ENCODE measurements at regions of chr17 and their contacts with region 1.

Region 1: DNA sequence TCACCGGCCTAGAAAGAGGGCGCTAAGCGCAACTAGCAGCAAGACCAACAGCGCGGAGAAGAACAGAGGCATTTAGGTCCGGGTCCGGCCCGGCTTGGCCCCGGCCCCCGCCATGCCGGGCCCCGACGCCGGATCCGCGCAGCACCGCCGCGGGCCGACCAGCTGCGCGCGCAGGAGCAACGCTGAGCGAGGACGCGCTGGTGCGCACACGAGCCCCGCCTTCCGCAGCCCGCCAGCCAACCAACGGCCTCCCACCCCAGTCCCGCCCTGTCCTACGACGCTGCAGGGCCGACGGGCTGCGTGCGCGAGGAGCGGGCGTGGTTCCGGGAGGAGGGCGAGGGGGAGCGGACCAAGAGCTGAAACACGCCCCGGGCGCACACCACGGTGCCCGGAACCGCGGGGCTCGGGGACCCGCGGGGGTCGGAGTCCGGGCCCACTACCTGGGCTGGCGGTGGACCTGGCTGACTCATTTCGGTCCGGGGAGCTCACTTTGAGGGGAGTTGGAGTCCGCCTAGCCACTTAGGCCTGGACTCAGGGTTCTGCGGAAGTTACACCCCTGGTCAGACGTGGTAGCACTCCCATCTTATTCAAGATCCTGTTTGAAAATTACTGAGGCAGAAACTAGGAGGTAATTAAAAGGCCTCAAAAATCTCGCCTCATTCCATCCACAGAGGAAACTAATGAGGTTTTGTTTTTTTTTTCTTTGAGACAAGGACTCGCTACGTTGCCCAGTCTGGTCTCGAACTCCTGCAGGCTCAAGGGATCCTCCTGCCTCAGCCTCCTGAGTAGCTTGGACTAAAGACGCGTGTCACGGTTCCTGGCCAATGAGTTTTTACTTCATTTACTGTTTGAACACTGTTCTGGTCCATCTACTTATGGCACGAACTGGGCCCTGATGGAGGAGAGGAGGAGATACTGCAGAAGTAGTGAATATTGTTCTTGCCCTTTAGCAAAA is at the start of gene BLTP2:
- DNase-seq: peak; percentile 97
- ATAC-seq: peak; percentile 97
- H3K4me3 ChIP-seq: peak within 1 kb of the TSS; percentile 79 to 93 (median 81)
- H3K4me3 Mint-ChIP-seq: peak within 1 kb of the TSS; percentile 97
- H3K27ac ChIP-seq: peak within 1 kb of the TSS; percentile 90 to 94
- H3K27ac Mint-ChIP-seq: peak within 1 kb of the TSS; percentile 89
- H3K4me1 ChIP-seq: peaks cover 32 to 37% of the 10 kb centered on the region in 2 donors
- H3K4me1 Mint-ChIP-seq: peaks cover 36% of the 10 kb centered on the region
- H3K27me3 ChIP-seq: no peaks in the 10 kb centered on the region
- H3K27me3 Mint-ChIP-seq: no peaks in the 10 kb centered on the region
- CTCF ChIP-seq: no peak
- total RNA-seq, gene BLTP2: 156 and 177 TPM in 2 replicates

Region 2: GRCh38 chr17:28598799-28599310 is 46.4 kb before region 1 on chr17 and contains the start of gene SPAG5:
- CTCF ChIA-PET with region 1: interaction called, 3 read pairs
- POLR2A ChIA-PET with region 1: interaction called, 5 read pairs
- intact Hi-C with region 1: loop called (anchors 1 kb)
- DNase-seq: peak; percentile 96
- ATAC-seq: peak; percentile 92
- H3K4me3 ChIP-seq: peak within 1 kb of the TSS; percentile 72 to 90 (median 79)
- H3K4me3 Mint-ChIP-seq: peak within 1 kb of the TSS; percentile 98
- H3K27ac ChIP-seq: peak within 1 kb of the TSS; percentile 95 to 98
- H3K27ac Mint-ChIP-seq: peak within 1 kb of the TSS; percentile 98
- H3K4me1 ChIP-seq: peaks cover 19% of the 10 kb centered on the region in 2 donors
- H3K4me1 Mint-ChIP-seq: peaks cover 24% of the 10 kb centered on the region
- H3K27me3 ChIP-seq: no peaks in the 10 kb centered on the region
- H3K27me3 Mint-ChIP-seq: no peaks in the 10 kb centered on the region
- CTCF ChIP-seq: no peak
- total RNA-seq, gene SPAG5: 8.0 and 10.1 TPM in 2 replicates

Region 3: GRCh38 chr17:28710861-28711722 is 65.8 kb after region 1 on chr17:
- CTCF ChIA-PET with region 1: interaction called, 7 read pairs
- POLR2A ChIA-PET with region 1: interaction called, 4 read pairs
- intact Hi-C with region 1: loop called (anchors 1 kb)
- DNase-seq: peak; percentile 88
- ATAC-seq: peak; percentile 90
- H3K4me3 ChIP-seq: peak overlapping the region; percentile 54 to 88 (median 73)
- H3K4me3 Mint-ChIP-seq: peak overlapping the region; percentile 96
- H3K27ac ChIP-seq: peak overlapping the region; percentile 69 to 79
- H3K27ac Mint-ChIP-seq: peak overlapping the region; percentile 93
- H3K4me1 ChIP-seq: peaks cover 9 to 18% of the 10 kb centered on the region in 2 donors
- H3K4me1 Mint-ChIP-seq: peaks cover 19% of the 10 kb centered on the region
- H3K27me3 ChIP-seq: no peaks in the 10 kb centered on the region
- H3K27me3 Mint-ChIP-seq: no peaks in the 10 kb centered on the region
- CTCF ChIP-seq: no peak

Region 4: GRCh38 chr17:28902819-28903545 is 257.7 kb after region 1 on chr17 and contains the start of gene DHRS13:
- CTCF ChIA-PET with region 1: no interaction called
- POLR2A ChIA-PET with region 1: no interaction called
- intact Hi-C with region 1: loop called (anchors 5 kb)
- DNase-seq: peak; percentile 98
- ATAC-seq: peak; percentile 90
- H3K4me3 ChIP-seq: peak within 1 kb of the TSS; percentile 68 to 90 (median 76)
- H3K4me3 Mint-ChIP-seq: peak within 1 kb of the TSS; percentile 88
- H3K27ac ChIP-seq: peak within 1 kb of the TSS; percentile 61 to 77
- H3K27ac Mint-ChIP-seq: peak within 1 kb of the TSS; percentile 88
- H3K4me1 ChIP-seq: peaks cover 18 to 32% of the 10 kb centered on the region in 2 donors
- H3K4me1 Mint-ChIP-seq: peaks cover 34% of the 10 kb centered on the region
- H3K27me3 ChIP-seq: no peaks in the 10 kb centered on the region
- H3K27me3 Mint-ChIP-seq: no peaks in the 10 kb centered on the region
- CTCF ChIP-seq: peak; percentile 100
- total RNA-seq, gene DHRS13: 27.1 and 28.1 TPM in 2 replicates

Region 5: DNA sequence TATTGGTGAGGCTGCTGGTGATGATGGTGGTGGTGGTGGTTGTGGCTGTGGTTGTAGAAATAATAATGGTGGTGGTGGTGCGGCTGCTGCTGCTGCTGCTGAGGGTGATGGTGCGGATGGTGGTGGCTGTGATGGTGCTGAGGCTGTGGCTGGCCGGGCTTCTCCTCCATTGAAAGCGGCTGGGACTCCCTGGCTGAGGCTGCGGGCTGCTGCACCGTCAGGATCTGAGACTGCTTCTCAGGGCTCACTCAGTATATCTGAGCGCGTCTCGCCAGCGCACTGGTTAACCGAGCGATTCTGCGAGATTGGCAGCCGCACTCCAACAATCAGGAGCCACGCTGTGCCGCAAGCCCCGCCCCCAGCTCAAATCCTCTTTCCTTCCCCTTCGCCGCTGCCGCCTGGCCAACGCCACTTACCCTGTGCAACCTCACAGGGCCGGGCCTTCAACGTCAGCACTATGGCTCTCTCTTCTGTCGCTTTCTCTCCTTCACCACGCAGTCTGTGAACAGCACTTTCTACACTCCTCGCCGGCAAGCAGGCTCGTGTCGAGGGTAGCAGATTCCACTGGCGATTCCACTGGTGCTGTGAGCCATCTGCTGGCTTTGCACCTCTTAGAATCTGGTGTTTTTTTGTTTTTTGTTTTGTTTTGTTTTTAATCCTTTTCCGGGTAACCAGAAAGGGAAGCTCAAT is 648.8 kb after region 1 on chr17 and contains the start of gene NUFIP2:
- CTCF ChIA-PET with region 1: interaction called, 5 read pairs
- POLR2A ChIA-PET with region 1: interaction called, 3 read pairs
- intact Hi-C with region 1: loop called (anchors 2 kb)
- DNase-seq: peak; percentile 99
- ATAC-seq: peak; percentile 84
- H3K4me3 ChIP-seq: peak within 1 kb of the TSS; percentile 89 to 95 (median 91)
- H3K4me3 Mint-ChIP-seq: peak within 1 kb of the TSS; percentile 97
- H3K27ac ChIP-seq: peak within 1 kb of the TSS; percentile 82 to 94
- H3K27ac Mint-ChIP-seq: peak within 1 kb of the TSS; percentile 97
- H3K4me1 ChIP-seq: peaks cover 30 to 34% of the 10 kb centered on the region in 2 donors
- H3K4me1 Mint-ChIP-seq: peaks cover 30% of the 10 kb centered on the region
- H3K27me3 ChIP-seq: no peaks in the 10 kb centered on the region
- H3K27me3 Mint-ChIP-seq: no peaks in the 10 kb centered on the region
- CTCF ChIP-seq: no peak
- total RNA-seq, gene NUFIP2: 76.5 and 83.5 TPM in 2 replicates

Measured in B cell (primary cell).